WTC11 (cell line): ENCODE measurements at regions of chr12 and their contacts with region 1.

Region 1: DNA sequence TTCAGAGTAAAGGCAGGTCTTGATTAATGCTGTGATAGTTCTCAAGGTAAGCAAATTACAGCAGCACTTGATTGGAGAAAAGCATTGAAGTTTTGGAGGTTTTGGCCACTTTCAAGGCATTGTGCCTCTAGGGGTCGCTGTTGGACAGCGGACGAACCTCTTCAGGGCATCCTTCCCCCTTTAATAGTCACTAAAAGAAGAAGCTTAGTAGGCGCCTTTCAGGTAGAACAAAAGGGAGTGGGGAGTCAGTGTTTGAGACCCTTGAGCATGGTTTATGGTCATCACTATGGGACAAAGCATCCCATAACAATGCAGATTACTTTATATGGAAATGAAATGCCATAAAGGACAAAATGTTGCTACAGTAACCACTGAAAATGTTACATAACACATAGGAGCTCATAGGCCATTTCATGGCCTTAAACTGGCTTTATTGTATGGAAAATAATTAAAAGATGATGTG is 199.5 kb upstream of the DCN start:
- DNase-seq: peak; percentile 91
- ATAC-seq: peak; percentile 74
- H3K4me3 Mint-ChIP-seq: peak overlapping the region; percentile 83
- H3K27ac Mint-ChIP-seq: peak overlapping the region; percentile 100
- H3K4me1 Mint-ChIP-seq: peaks cover 39% of the 10 kb centered on the region
- H3K27me3 Mint-ChIP-seq: no peaks in the 10 kb centered on the region
- CTCF ChIP-seq: peak; percentile 85

Region 2: DNA sequence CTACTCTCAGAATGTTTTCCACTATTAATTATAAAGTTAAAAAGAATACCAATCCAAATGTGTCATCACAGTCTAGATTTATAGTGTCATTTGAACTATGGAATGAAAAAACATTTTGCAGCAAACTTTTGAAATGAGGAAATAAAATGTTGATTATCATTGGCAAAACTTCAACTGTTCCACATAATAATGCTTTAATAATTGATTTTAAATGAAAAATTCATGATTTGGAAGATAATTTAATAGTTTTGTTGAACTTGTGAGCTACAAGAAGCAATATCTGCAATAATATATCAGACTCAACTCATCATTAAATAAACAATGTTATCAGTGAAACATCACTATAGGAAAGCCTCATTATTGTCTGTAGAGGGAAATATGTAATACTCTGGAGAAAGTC is 151.3 kb before region 1 on chr12:
- CTCF ChIA-PET with region 1: no interaction called
- POLR2A ChIA-PET with region 1: no interaction called
- DNase-seq: no peak
- ATAC-seq: no peak
- H3K4me3 Mint-ChIP-seq: no peak overlapping the region
- H3K27ac Mint-ChIP-seq: no peak overlapping the region
- H3K4me1 Mint-ChIP-seq: no peaks in the 10 kb centered on the region
- H3K27me3 Mint-ChIP-seq: no peaks in the 10 kb centered on the region
- CTCF ChIP-seq: no peak

Region 3: DNA sequence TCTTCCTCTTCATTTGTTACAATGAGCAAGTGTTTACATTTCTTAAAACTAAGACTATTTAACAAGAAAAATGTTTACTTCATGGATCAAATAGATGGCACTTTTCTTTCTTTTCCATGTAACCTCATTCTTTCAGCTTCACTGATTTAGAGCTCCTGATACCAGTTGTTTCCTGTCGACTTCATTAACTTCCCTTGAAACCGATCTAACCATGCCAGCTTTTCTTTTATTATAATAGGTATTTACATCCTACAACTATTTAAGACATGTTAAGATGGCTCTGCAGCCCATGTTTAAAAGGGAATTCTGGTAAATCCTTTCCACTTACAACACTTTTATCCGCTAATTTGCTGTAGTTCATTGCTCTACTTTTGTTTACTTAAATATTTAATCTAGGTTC is 92.2 kb before region 1 on chr12:
- CTCF ChIA-PET with region 1: no interaction called
- POLR2A ChIA-PET with region 1: no interaction called
- DNase-seq: no peak
- ATAC-seq: no peak
- H3K4me3 Mint-ChIP-seq: no peak overlapping the region
- H3K27ac Mint-ChIP-seq: no peak overlapping the region
- H3K4me1 Mint-ChIP-seq: peaks cover 2% of the 10 kb centered on the region
- H3K27me3 Mint-ChIP-seq: no peaks in the 10 kb centered on the region
- CTCF ChIP-seq: no peak

Region 4: GRCh38 chr12:91361864-91362263 is 20.2 kb before region 1 on chr12:
- CTCF ChIA-PET with region 1: interaction called, 11 read pairs
- POLR2A ChIA-PET with region 1: no interaction called
- DNase-seq: no peak
- ATAC-seq: no peak
- H3K4me3 Mint-ChIP-seq: no peak overlapping the region
- H3K27ac Mint-ChIP-seq: no peak overlapping the region
- H3K4me1 Mint-ChIP-seq: peaks cover 7% of the 10 kb centered on the region; the same call in 1 of the 2 replicates
- H3K27me3 Mint-ChIP-seq: no peaks in the 10 kb centered on the region
- CTCF ChIP-seq: peak; percentile 51

Region 5: GRCh38 chr12:91406920-91407341 is 24.8 kb after region 1 on chr12:
- CTCF ChIA-PET with region 1: interaction called, 10 read pairs
- POLR2A ChIA-PET with region 1: no interaction called
- DNase-seq: no peak
- ATAC-seq: no peak
- H3K4me3 Mint-ChIP-seq: no peak overlapping the region
- H3K27ac Mint-ChIP-seq: no peak overlapping the region
- H3K4me1 Mint-ChIP-seq: peaks cover 12% of the 10 kb centered on the region
- H3K27me3 Mint-ChIP-seq: no peaks in the 10 kb centered on the region
- CTCF ChIP-seq: no peak

Region 6: DNA sequence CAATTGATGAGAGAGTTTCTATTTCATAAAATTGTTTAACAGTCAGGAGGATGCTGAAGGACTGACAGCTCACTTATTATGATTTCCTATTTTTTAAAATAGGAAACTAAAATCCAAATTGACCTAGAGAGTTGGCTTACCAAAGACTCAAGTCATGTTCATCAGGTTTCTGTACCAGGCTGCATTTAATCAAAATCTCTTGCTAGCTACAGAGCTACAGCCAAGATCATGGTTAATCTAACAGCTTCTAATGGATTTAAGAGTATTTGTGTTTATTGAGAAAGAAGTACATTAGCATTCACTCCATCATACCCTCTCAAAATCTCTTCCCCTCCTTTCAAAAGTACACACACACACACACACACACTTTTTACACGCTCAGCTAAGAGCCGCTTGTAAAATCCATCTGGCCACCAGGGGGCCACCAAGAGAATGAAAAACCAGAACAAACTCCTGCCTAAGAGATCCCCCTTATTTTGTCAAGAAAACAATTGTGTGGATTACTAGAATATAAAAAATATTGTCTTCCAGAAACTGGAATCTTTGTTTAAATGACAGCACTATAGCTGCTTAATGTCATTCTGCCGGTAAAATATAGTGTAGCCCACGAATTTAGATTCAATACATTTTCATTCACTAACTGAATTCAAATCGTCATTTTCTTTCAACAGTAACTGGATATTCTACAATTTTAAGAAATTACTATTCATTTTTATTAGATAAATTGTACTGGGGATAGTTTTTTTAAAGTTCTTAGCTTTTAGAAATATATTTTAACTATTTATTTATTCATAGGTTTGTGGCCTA is 429.6 kb after region 1 on chr12:
- CTCF ChIA-PET with region 1: interaction called, 12 read pairs
- POLR2A ChIA-PET with region 1: no interaction called
- DNase-seq: peak; percentile 71
- ATAC-seq: peak; percentile 57; the same call in 1 of the 2 replicates
- H3K4me3 Mint-ChIP-seq: no peak overlapping the region
- H3K27ac Mint-ChIP-seq: no peak overlapping the region
- H3K4me1 Mint-ChIP-seq: no peaks in the 10 kb centered on the region
- H3K27me3 Mint-ChIP-seq: no peaks in the 10 kb centered on the region
- CTCF ChIP-seq: peak; percentile 80

Region 7: GRCh38 chr12:92408072-92408900 is 1026.2 kb after region 1 on chr12:
- CTCF ChIA-PET with region 1: interaction called, 12 read pairs
- POLR2A ChIA-PET with region 1: no interaction called
- DNase-seq: peak; percentile 55
- ATAC-seq: peak; percentile 88
- H3K4me3 Mint-ChIP-seq: no peak overlapping the region
- H3K27ac Mint-ChIP-seq: no peak overlapping the region
- H3K4me1 Mint-ChIP-seq: peaks cover 22% of the 10 kb centered on the region
- H3K27me3 Mint-ChIP-seq: no peaks in the 10 kb centered on the region
- CTCF ChIP-seq: 0 out of 2 replicates have a peak, but pooled peaks have one; percentile 19

Region 8: GRCh38 chr12:92608151-92609091 is 1226.3 kb after region 1 on chr12:
- CTCF ChIA-PET with region 1: interaction called, 12 read pairs
- POLR2A ChIA-PET with region 1: no interaction called
- DNase-seq: no peak
- ATAC-seq: peak; percentile 71
- H3K4me3 Mint-ChIP-seq: no peak overlapping the region
- H3K27ac Mint-ChIP-seq: no peak overlapping the region
- H3K4me1 Mint-ChIP-seq: peaks cover 26% of the 10 kb centered on the region
- H3K27me3 Mint-ChIP-seq: no peaks in the 10 kb centered on the region
- CTCF ChIP-seq: no peak